ENCODE measurements at regions of chr2 and their contacts with region 1.

Region 1: GRCh38 chr2:235135990-235136561 is 184.3 kb downstream of the SH3BP4 start:
- DNase-seq: peak in 1 of 2 donors; percentile 82
- H3K4me3 ChIP-seq: no peak overlapping the region
- H3K27ac ChIP-seq: no peak overlapping the region
- H3K4me1 ChIP-seq: no peaks in the 10 kb centered on the region
- H3K27me3 ChIP-seq: no peaks in the 10 kb centered on the region
- CTCF ChIP-seq: peak in 2 of 3 experiments; percentile 42 to 55
- POLR2A ChIP-seq: no peak

Region 2: GRCh38 chr2:235116885-235117492 is 19.1 kb before region 1 on chr2:
- intact Hi-C with region 1: no loop called
- DNase-seq: no peak
- H3K4me3 ChIP-seq: no peak overlapping the region
- H3K27ac ChIP-seq: no peak overlapping the region
- H3K4me1 ChIP-seq: no peaks in the 10 kb centered on the region
- H3K27me3 ChIP-seq: no peaks in the 10 kb centered on the region
- CTCF ChIP-seq: peak; percentile 33 to 75 (median 69)
- POLR2A ChIP-seq: no peak

Region 3: DNA sequence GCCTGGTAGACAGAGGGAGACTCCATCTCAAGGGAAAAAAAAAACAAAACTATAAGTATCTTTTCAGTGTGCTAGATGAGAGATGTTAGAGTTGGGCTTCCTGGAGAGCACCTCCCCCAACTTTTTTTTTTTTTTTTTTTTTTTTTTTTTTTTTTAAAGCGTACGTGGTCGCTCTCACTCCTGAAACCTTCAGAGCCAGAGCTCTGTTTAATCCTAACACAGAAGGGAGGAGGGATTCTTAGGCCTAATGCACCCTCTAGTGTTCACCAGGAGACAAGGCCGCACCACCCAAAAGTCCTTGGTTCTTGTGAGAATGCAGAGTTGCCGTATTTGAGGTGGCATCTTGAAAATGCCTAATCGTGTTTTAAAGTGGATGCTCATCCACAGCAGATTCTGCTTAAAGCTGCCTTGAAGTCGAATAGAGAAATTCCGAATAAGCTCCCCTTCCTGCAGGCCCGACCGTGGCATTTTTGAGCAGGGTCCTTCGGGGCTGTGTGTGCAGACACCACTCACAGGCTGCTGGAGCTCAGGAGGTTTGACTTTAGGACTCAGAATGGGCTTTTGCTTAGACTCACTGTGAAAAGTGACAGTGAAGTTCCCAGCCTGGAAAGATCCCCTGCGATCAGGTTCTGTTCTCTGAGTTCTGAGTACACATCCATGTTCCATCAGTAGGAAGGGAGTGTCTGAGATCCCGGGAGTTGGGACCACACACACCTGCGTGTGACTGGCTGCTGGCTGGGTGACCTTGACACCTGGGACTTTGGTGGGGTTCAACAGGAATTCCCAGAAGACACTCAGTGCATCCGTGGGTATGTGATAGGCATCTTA is 610.4 kb after region 1 on chr2:
- intact Hi-C with region 1: loop called (anchors 10 kb)
- DNase-seq: no peak
- H3K4me3 ChIP-seq: no peak overlapping the region
- H3K27ac ChIP-seq: no peak overlapping the region
- H3K4me1 ChIP-seq: peaks cover 17% of the 10 kb centered on the region
- H3K27me3 ChIP-seq: no peaks in the 10 kb centered on the region
- CTCF ChIP-seq: peak; percentile 8 to 74 (median 69)
- POLR2A ChIP-seq: no peak